Breast epithelium (tissue), 4 donors: ENCODE measurements at regions of chrX and their contacts with region 1.

Region 1: GRCh38 chrX:48939524-48940228 is 17.7 kb downstream of the OTUD5 start:
- DNase-seq: no peak
- H3K4me3 ChIP-seq: no peak overlapping the region
- H3K27ac ChIP-seq: peak overlapping the region in 1 of 2 donors; percentile 7
- H3K4me1 ChIP-seq: no peaks in the 10 kb centered on the region
- H3K27me3 ChIP-seq: peaks cover 0 to 40% of the 10 kb centered on the region in 2 donors
- CTCF ChIP-seq: no peak
- POLR2A ChIP-seq: no peak

Region 2: DNA sequence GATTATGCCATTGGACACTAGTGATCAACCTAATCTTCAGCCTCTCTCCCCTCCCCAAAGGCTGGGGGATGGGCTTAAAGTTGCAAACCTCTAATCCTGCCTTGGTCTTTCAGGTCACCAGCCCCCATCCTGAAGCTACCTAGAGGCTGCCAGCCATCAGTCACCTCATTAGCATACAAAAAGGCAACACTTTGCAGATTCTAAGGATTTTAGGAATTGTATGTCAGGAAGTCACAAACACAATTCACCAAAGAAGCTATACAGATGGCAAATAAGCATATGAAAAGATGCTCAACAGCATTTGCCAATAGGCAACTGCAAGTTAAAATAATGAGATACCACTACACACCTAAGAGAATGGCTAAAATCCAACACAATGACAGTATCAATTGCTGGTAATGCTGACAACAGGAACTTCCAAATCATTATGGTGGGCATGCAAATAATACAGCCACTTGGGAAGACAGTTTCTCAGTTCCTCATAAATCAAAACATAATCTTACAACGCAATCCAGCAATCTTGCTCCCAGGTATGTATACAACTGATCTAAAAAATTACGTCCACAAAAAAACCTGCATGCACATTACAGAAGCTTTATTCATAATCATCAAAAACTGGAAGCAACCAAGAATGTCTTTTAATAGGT is 11.8 kb before region 1 on chrX:
- intact Hi-C with region 1: no loop called
- DNase-seq: no peak
- H3K4me3 ChIP-seq: no peak overlapping the region
- H3K27ac ChIP-seq: no peak overlapping the region
- H3K4me1 ChIP-seq: no peaks in the 10 kb centered on the region
- H3K27me3 ChIP-seq: peaks cover 0 to 19% of the 10 kb centered on the region in 2 donors
- CTCF ChIP-seq: no peak
- POLR2A ChIP-seq: no peak

Region 3: GRCh38 chrX:48972220-48973167 is 32.8 kb after region 1 on chrX:
- intact Hi-C with region 1: no loop called
- DNase-seq: no peak
- H3K4me3 ChIP-seq: peak overlapping the region; percentile 33 to 61 (median 47)
- H3K27ac ChIP-seq: peak overlapping the region; percentile 18 to 50
- H3K4me1 ChIP-seq: no peaks in the 10 kb centered on the region
- H3K27me3 ChIP-seq: peaks cover 0 to 48% of the 10 kb centered on the region in 2 donors
- CTCF ChIP-seq: peak in 2 of 3 donors; percentile 15 to 18
- POLR2A ChIP-seq: no peak

Region 4: DNA sequence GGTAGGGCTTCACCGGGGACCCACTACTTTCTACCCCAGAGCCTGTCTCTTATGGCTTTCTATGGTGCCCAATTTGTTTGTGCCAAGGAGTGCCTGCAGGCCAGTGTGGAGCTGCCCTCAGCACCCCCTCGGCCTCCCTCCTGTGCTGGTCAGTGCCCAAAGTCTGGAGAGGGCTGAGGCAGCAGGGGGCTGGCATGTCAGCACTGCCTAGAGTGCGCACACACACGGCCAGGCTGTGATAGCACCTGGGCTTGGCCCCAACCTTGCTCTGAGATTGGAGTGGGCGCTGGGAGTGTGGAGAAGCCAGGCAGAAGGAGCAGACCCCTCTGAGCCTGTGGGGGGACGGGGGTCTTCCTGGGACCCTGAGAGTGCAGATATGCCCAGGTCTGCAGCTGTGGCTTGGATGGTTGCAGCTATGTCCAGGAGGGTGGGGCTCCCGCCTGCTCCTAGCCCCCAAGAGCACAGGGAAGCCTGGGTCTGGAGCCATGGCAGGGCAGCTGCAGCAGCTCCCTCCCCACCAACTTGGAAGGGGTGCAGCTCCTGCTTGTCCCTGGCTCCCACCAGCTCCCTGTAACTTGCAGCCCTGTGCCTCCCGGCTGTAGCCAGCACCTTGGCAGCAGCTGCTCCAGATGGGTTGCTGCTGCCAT is 705.4 kb after region 1 on chrX:
- intact Hi-C with region 1: loop called (anchors 5 kb)
- DNase-seq: no peak
- H3K4me3 ChIP-seq: no peak overlapping the region
- H3K27ac ChIP-seq: no peak overlapping the region
- H3K4me1 ChIP-seq: no peaks in the 10 kb centered on the region
- H3K27me3 ChIP-seq: peaks cover 0 to 64% of the 10 kb centered on the region in 2 donors
- CTCF ChIP-seq: no peak
- POLR2A ChIP-seq: no peak